Breast epithelium (tissue), 4 donors: ENCODE measurements at regions of chr2 and their contacts with region 1.

Region 1: GRCh38 chr2:19883971-19884720 is 17.6 kb downstream of the TTC32 start:
- DNase-seq: no peak
- H3K4me3 ChIP-seq: no peak overlapping the region
- H3K27ac ChIP-seq: no peak overlapping the region
- H3K4me1 ChIP-seq: no peaks in the 10 kb centered on the region
- H3K27me3 ChIP-seq: no peaks in the 10 kb centered on the region
- CTCF ChIP-seq: no peak
- POLR2A ChIP-seq: no peak

Region 2: DNA sequence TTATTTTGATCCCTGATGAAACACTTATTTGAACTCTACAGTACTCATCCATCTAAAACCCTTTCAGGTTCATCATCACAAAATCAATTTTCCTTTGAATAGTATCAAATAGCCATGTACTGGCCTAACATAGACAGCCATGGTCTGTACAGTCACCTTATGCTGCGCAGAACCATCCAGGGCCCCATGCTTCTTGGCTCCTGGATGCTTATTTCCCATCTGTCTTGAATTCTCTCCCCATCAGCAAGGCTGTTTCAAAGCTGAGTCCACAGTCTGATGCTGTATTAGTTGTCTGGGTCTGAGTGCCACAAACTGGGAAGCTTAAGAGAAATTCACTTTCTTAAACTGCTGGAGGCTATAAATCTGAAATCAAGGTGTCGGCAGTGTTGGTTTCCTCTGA is 815.9 kb before region 1 on chr2:
- intact Hi-C with region 1: loop called (anchors 5 kb)
- DNase-seq: no peak
- H3K4me3 ChIP-seq: no peak overlapping the region
- H3K27ac ChIP-seq: no peak overlapping the region
- H3K4me1 ChIP-seq: no peaks in the 10 kb centered on the region
- H3K27me3 ChIP-seq: no peaks in the 10 kb centered on the region
- CTCF ChIP-seq: no peak
- POLR2A ChIP-seq: no peak

Region 3: GRCh38 chr2:19574778-19575260 is 309.3 kb before region 1 on chr2:
- intact Hi-C with region 1: no loop called
- DNase-seq: peak; percentile 48 to 56
- H3K4me3 ChIP-seq: no peak overlapping the region
- H3K27ac ChIP-seq: no peak overlapping the region
- H3K4me1 ChIP-seq: peaks cover 0 to 7% of the 10 kb centered on the region in 2 donors
- H3K27me3 ChIP-seq: no peaks in the 10 kb centered on the region
- CTCF ChIP-seq: no peak
- POLR2A ChIP-seq: no peak